Sigmoid colon (tissue), 7 donors: ENCODE measurements at regions of chr19 and their contacts with region 1.

Region 1: GRCh38 chr19:11061952-11062351 is 27.3 kb upstream of the LDLR start:
- DNase-seq: peak; percentile 92
- H3K4me3 ChIP-seq: no peak overlapping the region
- H3K27ac ChIP-seq: peak overlapping the region; percentile 70 to 87 (median 82)
- H3K4me1 ChIP-seq: peaks cover 0 to 31% (median 18%) of the 10 kb centered on the region in 4 donors
- H3K27me3 ChIP-seq: no peaks in the 10 kb centered on the region
- CTCF ChIP-seq: no peak
- EP300 ChIP-seq: peak; percentile 38 to 88 (median 82)
- POLR2A ChIP-seq: no peak

Region 2: DNA sequence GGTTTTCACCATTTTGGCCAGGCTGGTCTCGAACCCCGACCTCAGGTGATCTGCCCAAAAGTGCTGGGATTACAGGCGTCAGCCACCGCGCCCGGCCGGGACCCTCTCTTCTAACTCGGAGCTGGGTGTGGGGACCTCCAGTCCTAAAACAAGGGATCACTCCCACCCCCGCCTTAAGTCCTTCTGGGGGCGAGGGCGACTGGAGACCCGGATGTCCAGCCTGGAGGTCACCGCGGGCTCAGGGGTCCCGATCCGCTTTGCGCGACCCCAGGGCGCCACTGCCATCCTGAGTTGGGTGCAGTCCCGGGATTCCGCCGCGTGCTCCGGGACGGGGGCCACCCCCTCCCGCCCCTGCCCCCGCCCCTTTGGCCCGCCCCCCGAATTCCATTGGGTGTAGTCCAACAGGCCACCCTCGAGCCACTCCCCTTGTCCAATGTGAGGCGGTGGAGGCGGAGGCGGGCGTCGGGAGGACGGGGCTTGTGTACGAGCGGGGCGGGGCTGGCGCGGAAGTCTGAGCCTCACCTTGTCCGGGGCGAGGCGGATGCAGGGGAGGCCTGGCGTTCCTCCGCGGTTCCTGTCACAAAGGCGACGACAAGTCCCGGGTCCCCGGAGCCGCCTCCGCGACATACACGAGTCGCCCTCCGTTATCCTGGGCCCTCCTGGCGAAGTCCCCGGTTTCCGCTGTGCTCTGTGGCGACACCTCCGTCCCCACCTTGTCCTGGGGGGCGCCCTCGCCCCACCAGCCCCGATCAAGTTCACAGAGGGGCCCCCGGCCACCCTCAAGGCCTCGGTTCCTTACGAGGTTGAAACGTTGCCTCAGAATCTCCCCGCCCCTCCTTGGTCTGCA is 28.3 kb after region 1 on chr19:
- intact Hi-C with region 1: loop called (anchors 2 kb)
- DNase-seq: peak; percentile 99
- H3K4me3 ChIP-seq: peak overlapping the region; percentile 53 to 77 (median 65)
- H3K27ac ChIP-seq: peak overlapping the region; percentile 91 to 98 (median 96)
- H3K4me1 ChIP-seq: peaks cover 0 to 69% (median 60%) of the 10 kb centered on the region in 4 donors
- H3K27me3 ChIP-seq: no peaks in the 10 kb centered on the region
- CTCF ChIP-seq: no peak
- EP300 ChIP-seq: peak in 2 of 4 donors; percentile 9 to 32
- POLR2A ChIP-seq: peak; percentile 95 to 96

Region 3: GRCh38 chr19:11106477-11106876 is 44.5 kb after region 1 on chr19:
- intact Hi-C with region 1: no loop called
- DNase-seq: peak; percentile 92
- H3K4me3 ChIP-seq: no peak overlapping the region
- H3K27ac ChIP-seq: peak overlapping the region in 2 of 4 donors; percentile 3 to 18
- H3K4me1 ChIP-seq: no peaks in the 10 kb centered on the region
- H3K27me3 ChIP-seq: no peaks in the 10 kb centered on the region
- CTCF ChIP-seq: no peak
- EP300 ChIP-seq: no peak
- POLR2A ChIP-seq: no peak